ENCODE measurements at regions of chr15 and their contacts with region 1.

Region 1: DNA sequence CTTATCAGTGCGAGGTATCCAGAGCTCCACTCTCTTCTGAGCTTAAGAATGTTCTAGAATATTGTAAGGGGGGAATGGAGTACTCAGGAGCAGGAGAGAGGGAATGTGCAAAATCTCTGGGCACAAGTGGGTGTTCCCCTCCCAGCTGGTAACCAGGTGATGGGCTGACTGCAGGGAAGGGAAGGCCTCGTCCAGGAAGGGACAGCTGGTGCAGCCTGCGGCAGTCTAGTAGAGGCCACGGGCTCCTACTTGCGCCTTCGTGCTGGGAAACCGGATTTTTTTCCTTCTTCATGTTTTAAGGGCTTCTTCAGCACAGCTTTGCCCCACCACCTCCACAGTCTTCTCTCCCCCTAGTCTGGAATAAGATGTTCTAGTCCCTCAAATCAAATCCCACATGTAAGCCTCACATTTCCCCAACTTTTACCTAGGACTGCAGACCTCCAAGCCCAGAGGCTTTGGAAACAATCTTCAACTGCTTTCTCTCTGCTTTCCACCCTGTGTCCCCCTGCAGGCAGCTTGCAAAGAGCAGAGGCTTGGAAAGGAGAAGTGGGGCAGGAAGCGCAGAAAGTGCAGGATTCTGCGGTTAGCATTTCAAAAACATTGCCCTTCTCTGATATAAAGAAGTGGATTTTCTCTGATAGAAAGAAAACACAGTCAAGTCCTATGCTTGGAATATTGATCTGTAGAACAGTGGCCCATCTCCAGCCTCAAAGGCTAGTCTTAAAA is 11.9 kb upstream of the CGNL1 start:
- DNase-seq: no peak
- H3K4me3 ChIP-seq: no peak overlapping the region
- H3K27ac ChIP-seq: no peak overlapping the region
- H3K4me1 ChIP-seq: no peaks in the 10 kb centered on the region
- H3K27me3 ChIP-seq: no peaks in the 10 kb centered on the region
- CTCF ChIP-seq: no peak
- EP300 ChIP-seq: no peak
- POLR2A ChIP-seq: no peak

Region 2: DNA sequence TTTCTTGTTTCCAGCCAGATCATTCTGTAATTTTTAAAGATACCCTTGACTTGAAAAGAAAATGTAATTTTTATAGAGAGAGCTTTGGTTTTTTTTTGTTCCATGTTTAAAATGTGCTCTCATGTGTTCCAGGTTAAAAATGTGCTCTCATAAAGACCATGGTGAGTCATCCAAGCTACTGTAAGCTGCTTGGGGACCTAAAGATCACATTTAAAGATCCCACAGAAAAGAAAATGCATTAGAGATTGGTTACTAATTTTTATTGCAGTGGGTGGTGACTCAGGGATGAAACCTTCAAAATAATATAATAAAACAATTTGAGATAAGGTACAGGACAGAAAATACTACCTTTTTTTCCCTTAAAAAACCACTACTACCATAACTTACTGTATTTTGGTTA is 435.0 kb before region 1 on chr15:
- intact Hi-C with region 1: no loop called
- DNase-seq: no peak
- H3K4me3 ChIP-seq: no peak overlapping the region
- H3K27ac ChIP-seq: no peak overlapping the region
- H3K4me1 ChIP-seq: peaks cover 11% of the 10 kb centered on the region
- H3K27me3 ChIP-seq: no peaks in the 10 kb centered on the region
- CTCF ChIP-seq: no peak
- EP300 ChIP-seq: no peak
- POLR2A ChIP-seq: no peak

Region 3: GRCh38 chr15:57406062-57406772 is 41.8 kb after region 1 on chr15:
- intact Hi-C with region 1: no loop called
- DNase-seq: no peak
- H3K4me3 ChIP-seq: no peak overlapping the region
- H3K27ac ChIP-seq: no peak overlapping the region
- H3K4me1 ChIP-seq: peaks cover 5% of the 10 kb centered on the region
- H3K27me3 ChIP-seq: no peaks in the 10 kb centered on the region
- CTCF ChIP-seq: no peak
- EP300 ChIP-seq: no peak
- POLR2A ChIP-seq: no peak

Region 4: GRCh38 chr15:57462381-57462780 is 97.9 kb after region 1 on chr15:
- intact Hi-C with region 1: loop called in 1 of 4 experiments (anchors 10 kb)
- DNase-seq: no peak
- H3K4me3 ChIP-seq: no peak overlapping the region
- H3K27ac ChIP-seq: no peak overlapping the region
- H3K4me1 ChIP-seq: no peaks in the 10 kb centered on the region
- H3K27me3 ChIP-seq: no peaks in the 10 kb centered on the region
- CTCF ChIP-seq: peak in 1 of 3 donors; percentile 24
- EP300 ChIP-seq: no peak
- POLR2A ChIP-seq: no peak